ENCODE measurements at regions of chr10 and their contacts with region 1.

Region 1: DNA sequence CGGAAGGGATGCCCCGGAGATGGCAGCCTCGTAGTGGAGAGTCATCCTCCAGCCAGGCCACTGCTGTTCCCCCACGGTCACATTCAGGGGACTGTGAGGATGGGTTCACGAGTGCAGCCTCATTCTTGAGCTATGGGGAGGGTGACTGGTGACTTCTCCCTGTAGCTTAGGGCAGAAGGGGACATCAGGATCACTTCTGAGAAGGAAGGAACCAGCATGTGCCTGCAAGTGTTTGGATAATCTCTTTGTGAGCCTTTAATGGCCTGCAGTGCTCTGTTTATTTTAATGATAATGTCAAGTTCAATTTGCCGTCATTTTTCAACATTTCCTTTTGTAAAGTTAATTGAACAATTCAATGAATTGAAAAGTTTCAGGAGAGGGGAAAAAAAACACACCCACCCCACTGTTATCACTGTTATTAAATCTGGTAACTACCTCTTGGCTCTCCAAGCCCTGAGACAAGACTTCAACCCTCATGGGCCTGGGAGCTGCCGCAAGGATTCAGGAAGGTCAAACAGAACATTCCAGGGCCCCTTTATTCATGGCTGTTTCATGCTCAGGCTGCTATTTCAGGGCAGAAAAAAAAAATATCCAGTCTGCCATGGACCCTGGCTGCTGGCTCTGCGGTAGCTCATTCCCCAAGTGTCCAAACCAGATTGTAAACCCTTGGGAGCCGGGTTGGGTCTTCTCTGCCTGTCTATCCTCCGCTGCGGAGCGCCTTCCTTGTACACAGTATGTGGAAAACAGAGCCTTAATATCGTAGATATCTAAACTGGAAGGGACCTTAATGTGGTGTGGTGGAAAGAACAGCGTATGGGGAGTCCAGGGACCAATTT is 100.4 kb downstream of the CDH23 start:
- DNase-seq: no peak
- ATAC-seq: no peak
- H3K4me3 ChIP-seq: no peak overlapping the region
- H3K27ac ChIP-seq: no peak overlapping the region
- H3K4me1 ChIP-seq: no peaks in the 10 kb centered on the region
- H3K27me3 ChIP-seq: peaks cover 7% of the 10 kb centered on the region
- CTCF ChIP-seq: no peak

Region 2: GRCh38 chr10:71553432-71553831 is 56.3 kb after region 1 on chr10:
- CTCF ChIA-PET with region 1: no interaction called
- POLR2A ChIA-PET with region 1: interaction called, 25 read pairs
- in situ Hi-C with region 1: no loop called
- intact Hi-C with region 1: no loop called
- DNase-seq: no peak
- ATAC-seq: peak; percentile 29; the same call in 1 of the 2 replicates
- H3K4me3 ChIP-seq: no peak overlapping the region
- H3K27ac ChIP-seq: no peak overlapping the region
- H3K4me1 ChIP-seq: no peaks in the 10 kb centered on the region
- H3K27me3 ChIP-seq: peaks cover 6% of the 10 kb centered on the region
- CTCF ChIP-seq: no peak

Region 3: DNA sequence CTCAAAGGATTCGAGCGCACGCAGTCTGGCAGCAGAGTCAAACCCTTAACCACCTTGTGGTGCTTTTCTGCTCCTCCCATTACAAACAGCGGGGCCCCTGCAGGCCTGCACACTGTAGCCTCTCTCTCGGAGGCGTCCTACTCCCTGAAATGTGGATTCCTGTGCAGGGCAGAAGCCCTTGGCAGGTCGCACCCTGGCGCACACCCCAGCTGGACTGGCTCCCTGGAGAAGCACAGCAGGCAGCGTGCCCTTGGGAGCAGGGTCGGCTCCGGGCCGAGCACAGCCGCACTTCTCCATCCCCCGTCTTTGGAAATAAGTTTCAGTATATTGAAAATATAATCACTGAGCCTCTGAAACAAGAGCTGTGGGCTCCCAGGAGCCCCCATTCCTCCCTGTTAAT is 78.3 kb after region 1 on chr10:
- CTCF ChIA-PET with region 1: no interaction called
- POLR2A ChIA-PET with region 1: no interaction called
- in situ Hi-C with region 1: no loop called
- intact Hi-C with region 1: no loop called
- DNase-seq: no peak
- ATAC-seq: no peak; the same call in 1 of the 2 replicates
- H3K4me3 ChIP-seq: no peak overlapping the region
- H3K27ac ChIP-seq: no peak overlapping the region
- H3K4me1 ChIP-seq: peaks cover 6% of the 10 kb centered on the region; the same call in 1 of the 2 replicates
- H3K27me3 ChIP-seq: no peaks in the 10 kb centered on the region
- CTCF ChIP-seq: no peak

Region 4: GRCh38 chr10:71766702-71767419 is 269.7 kb after region 1 on chr10:
- CTCF ChIA-PET with region 1: no interaction called
- POLR2A ChIA-PET with region 1: no interaction called
- in situ Hi-C with region 1: no loop called
- intact Hi-C with region 1: no loop called
- DNase-seq: peak; percentile 59
- ATAC-seq: peak; percentile 78
- H3K4me3 ChIP-seq: peak overlapping the region in 1 of 2 experiments; percentile 26; a peak in 2 of 4 replicates
- H3K27ac ChIP-seq: peak overlapping the region; percentile 92
- H3K4me1 ChIP-seq: peaks cover 76% of the 10 kb centered on the region
- H3K27me3 ChIP-seq: no peaks in the 10 kb centered on the region
- CTCF ChIP-seq: no peak

Measured in Panc1 (cell line).